ENCODE measurements at regions of chr15 and their contacts with region 1.

Region 1: DNA sequence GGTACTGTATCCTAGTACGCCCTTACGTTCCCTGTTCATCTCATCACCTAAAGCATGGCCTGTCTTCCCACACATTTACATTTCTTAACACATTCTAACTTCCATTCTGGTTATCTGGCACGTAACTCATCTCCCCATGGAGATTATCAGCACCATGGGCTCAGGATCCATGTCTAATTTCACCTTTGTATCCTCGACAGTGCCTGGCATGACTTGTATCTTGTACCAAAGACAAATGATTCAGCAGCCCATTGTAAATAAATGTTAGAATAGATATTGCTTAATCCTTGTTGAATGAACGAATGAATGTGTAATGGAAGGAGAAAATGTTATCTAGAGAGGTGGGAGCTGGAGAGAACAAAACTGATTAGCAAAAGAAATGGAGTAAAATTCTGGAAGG is 69.7 kb upstream of the TPM1 start:
- DNase-seq: peak; percentile 80
- H3K4me3 ChIP-seq: no peak overlapping the region
- H3K27ac ChIP-seq: no peak overlapping the region
- H3K4me1 ChIP-seq: peaks cover 17% of the 10 kb centered on the region
- H3K27me3 ChIP-seq: no peaks in the 10 kb centered on the region
- CTCF ChIP-seq: no peak

Region 2: GRCh38 chr15:62928242-62928995 is 44.4 kb before region 1 on chr15:
- CTCF ChIA-PET with region 1: no interaction called
- dilution Hi-C with region 1: loop called (anchors 5 kb)
- in situ Hi-C with region 1: no loop called
- intact Hi-C with region 1: loop called (anchors 5 kb)
- DNase-seq: peak; percentile 88
- H3K4me3 ChIP-seq: no peak overlapping the region
- H3K27ac ChIP-seq: peak overlapping the region; percentile 87
- H3K4me1 ChIP-seq: peaks cover 32% of the 10 kb centered on the region
- H3K27me3 ChIP-seq: no peaks in the 10 kb centered on the region
- CTCF ChIP-seq: peak; percentile 39 to 46

Measured in mammary epithelial cell (primary cell).